ENCODE measurements at regions of chr12 and their contacts with region 1.

Region 1: GRCh38 chr12:49322708-49323523 is at the start of gene TROAP:
- DNase-seq: peak; percentile 97
- H3K4me3 ChIP-seq: peak within 1 kb of the TSS; percentile 67 to 88
- H3K27ac ChIP-seq: peak within 1 kb of the TSS; percentile 58 to 65
- H3K4me1 ChIP-seq: peaks cover 0 to 14% of the 10 kb centered on the region in 2 experiments; a peak in 1 of 4 replicates
- H3K27me3 ChIP-seq: no peaks in the 10 kb centered on the region
- CTCF ChIP-seq: no peak
- EP300 ChIP-seq: no peak
- RAD21 ChIP-seq: no peak
- polyA plus RNA-seq, gene TROAP: 15.0 and 26.2 TPM in 2 replicates

Region 2: GRCh38 chr12:49288412-49288853 is 34.5 kb before region 1 on chr12:
- CTCF ChIA-PET with region 1: interaction called, 17 read pairs
- POLR2A ChIA-PET with region 1: interaction called, 34 read pairs
- DNase-seq: peak; percentile 76
- H3K4me3 ChIP-seq: no peak overlapping the region; a peak in 1 of 4 replicates
- H3K27ac ChIP-seq: no peak overlapping the region
- H3K4me1 ChIP-seq: peaks cover 6 to 18% of the 10 kb centered on the region in 2 experiments; a peak in 3 of 4 replicates
- H3K27me3 ChIP-seq: no peaks in the 10 kb centered on the region
- CTCF ChIP-seq: peak; percentile 92
- EP300 ChIP-seq: no peak
- RAD21 ChIP-seq: peak; percentile 87

Region 3: DNA sequence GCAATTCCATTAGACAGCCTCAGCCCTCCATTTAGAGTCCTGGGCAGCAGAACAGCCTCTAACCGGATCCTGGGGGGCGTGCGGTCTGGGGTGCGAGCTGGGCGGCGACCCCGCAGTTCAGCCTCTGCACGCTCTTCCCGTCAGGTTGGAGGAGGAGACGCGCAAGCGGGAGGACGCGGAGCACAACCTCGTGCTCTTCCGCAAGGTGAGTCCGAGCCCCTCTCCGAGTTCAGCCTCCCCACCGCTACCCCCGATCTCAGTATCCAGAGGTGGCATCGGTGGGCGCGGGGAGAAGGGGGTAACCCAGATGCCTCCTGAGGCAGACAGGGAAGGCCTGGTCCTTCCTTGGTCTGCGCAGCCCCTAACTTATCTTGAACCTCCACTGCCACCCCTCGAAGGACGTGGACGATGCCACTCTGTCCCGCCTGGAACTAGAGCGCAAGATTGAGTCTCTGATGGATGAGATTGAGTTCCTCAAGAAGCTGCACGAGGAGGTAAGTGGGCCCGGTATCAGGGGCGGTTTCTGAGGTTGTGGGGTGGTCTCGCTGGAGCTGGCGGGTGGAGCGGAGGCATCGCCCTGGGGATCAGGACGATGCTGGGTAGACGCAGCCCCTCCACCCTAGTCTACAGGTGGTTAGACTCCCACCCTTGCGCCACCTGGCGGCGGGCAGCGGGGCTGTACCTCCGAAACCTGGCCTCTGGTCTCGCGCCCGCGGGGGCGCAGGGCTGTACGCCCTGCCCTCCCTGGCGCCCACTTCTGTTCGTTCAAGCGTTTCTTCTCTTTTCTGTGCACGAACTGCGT is 26.7 kb before region 1 on chr12:
- CTCF ChIA-PET with region 1: interaction called, 3 read pairs
- POLR2A ChIA-PET with region 1: interaction called, 34 read pairs
- DNase-seq: peak; percentile 39
- H3K4me3 ChIP-seq: no peak overlapping the region; a peak in 1 of 4 replicates
- H3K27ac ChIP-seq: no peak overlapping the region
- H3K4me1 ChIP-seq: peaks cover 7 to 29% of the 10 kb centered on the region in 2 experiments; a peak in 3 of 4 replicates
- H3K27me3 ChIP-seq: no peaks in the 10 kb centered on the region
- CTCF ChIP-seq: no peak
- EP300 ChIP-seq: no peak
- RAD21 ChIP-seq: no peak

Region 4: DNA sequence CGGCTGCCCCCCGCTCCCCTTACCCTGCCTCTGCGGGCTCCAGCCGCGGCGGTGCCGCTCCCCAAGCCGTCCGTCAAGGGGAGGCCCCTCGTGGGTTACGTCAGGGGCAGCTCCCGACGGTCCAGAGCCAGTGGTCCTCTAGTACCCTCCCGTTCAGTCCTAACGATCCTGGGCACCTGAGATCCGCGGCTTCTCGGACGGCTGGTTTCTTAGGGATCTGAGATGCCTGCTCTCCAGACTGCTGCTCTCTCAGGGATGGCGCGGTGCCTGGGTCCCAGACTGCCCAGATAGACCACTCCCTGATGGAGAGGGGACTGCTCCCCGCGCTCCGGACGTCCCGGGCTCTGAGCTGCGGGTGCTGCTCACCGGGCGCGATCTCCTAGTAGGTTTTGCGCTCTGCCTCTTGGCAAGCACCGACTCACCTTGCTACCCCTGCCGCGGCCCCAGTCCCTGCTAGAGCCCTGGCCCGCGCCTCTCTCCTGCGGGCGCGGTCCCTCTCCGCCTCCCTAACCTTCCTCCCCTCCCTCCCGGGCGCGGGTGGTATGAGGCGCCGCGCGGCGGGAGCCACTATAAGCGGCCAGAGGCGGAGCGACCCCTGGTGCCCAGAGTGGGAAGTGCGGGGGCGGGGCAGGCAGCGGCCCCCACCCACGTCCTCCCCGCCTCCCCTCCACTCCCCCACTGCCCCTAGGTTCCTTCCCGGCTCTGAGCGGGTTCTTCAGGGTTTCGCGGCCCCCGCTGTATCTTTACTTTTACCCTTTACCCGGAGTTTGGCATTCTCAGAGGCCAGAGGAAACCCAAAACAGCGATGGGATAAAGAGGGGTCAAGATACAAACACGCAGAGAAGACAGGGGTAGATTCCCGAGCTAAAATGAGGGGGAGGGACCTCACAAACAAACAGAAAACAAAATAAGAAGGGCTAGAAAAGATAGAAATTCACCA is 14.0 kb after region 1 on chr12 and contains the start of gene C1QL4:
- CTCF ChIA-PET with region 1: interaction called, 48 read pairs
- POLR2A ChIA-PET with region 1: interaction called, 9 read pairs
- DNase-seq: peak; percentile 99
- H3K4me3 ChIP-seq: peak within 1 kb of the TSS; percentile 69 to 97
- H3K27ac ChIP-seq: no peak within 1 kb of the TSS
- H3K4me1 ChIP-seq: peaks cover 0 to 9% of the 10 kb centered on the region in 2 experiments; a peak in 1 of 4 replicates
- H3K27me3 ChIP-seq: no peaks in the 10 kb centered on the region
- CTCF ChIP-seq: peak; percentile 84
- EP300 ChIP-seq: no peak
- RAD21 ChIP-seq: peak; percentile 52
- polyA plus RNA-seq, gene C1QL4: 9.8 and 14.6 TPM in 2 replicates

Region 5: DNA sequence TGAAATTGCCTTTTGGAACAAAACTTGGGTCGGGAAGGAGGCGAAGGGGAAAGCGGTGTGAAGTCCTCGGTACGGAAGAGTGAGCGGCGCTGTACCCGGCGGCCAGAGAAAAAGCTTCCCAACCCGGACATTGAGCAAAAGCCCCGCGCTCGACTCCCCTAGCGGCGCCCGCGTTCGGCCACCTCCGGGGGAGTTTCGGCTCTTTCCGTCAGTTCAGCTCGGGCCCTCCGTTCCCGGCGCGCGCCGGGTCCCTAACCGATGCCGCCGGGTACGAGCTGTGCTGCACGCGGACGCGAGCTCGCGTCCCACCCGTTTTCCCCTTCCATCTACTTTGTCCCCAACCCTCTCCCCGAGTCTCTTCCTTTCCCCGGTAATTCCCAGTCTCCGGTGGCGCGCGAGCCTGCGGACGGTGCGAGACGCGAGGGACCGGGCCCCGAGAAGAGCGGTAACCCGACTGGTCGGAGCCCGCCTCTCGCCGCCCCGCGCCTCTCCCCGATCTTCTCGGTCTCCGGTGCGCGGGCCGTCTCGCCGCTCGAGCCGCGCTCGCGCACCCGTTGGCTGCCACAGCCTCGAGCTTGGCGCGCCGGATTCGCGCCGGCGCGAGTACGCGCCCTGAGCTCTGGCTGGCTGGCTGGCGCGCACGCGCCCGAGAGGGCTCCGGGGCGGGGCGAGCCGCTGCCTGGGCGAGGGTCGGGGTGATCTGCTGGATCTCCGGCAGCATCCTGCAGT is 43.9 kb after region 1 on chr12:
- CTCF ChIA-PET with region 1: interaction called, 10 read pairs
- POLR2A ChIA-PET with region 1: interaction called, 5 read pairs
- DNase-seq: peak; percentile 98
- H3K4me3 ChIP-seq: peak overlapping the region; percentile 79 to 91
- H3K27ac ChIP-seq: peak overlapping the region; percentile 90 to 95
- H3K4me1 ChIP-seq: peaks cover 3 to 6% of the 10 kb centered on the region in 2 experiments; a peak in 3 of 4 replicates
- H3K27me3 ChIP-seq: no peaks in the 10 kb centered on the region
- CTCF ChIP-seq: peak; percentile 37
- EP300 ChIP-seq: peak in 1 of 2 experiments; percentile 15; a peak in 1 of 4 replicates
- RAD21 ChIP-seq: no peak

Region 6: DNA sequence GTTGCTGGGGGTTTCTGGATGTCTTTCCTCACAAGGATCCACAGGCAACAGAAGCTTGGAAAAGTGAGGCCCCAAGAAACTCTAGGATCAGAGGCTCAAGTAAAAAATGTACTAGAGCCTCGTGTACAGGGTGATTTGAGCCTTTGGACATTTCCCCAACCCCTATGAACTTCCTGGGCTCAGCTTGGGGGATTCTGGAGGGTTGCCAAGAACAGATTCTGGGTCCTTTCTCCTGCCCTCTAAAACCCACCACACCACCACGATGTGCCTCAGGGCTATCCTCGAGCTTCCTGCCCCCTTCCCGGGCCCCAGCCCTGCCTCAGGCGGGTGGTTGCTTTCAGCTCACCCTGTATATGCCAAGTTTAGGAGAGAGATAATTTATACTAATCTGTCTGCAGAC is 281.9 kb after region 1 on chr12:
- CTCF ChIA-PET with region 1: no interaction called
- POLR2A ChIA-PET with region 1: no interaction called
- DNase-seq: no peak
- H3K4me3 ChIP-seq: no peak overlapping the region
- H3K27ac ChIP-seq: no peak overlapping the region; a peak in 1 of 4 replicates
- H3K4me1 ChIP-seq: peaks cover 0 to 2% of the 10 kb centered on the region in 2 experiments; a peak in 1 of 4 replicates
- H3K27me3 ChIP-seq: no peaks in the 10 kb centered on the region
- CTCF ChIP-seq: no peak
- EP300 ChIP-seq: no peak
- RAD21 ChIP-seq: no peak